Naive thymus-derived CD4-positive, alpha-beta T cell (primary cell): ENCODE measurements at regions of chr2 and their contacts with region 1.

Region 1: GRCh38 chr2:42568401-42569115 is at the start of gene MTA3:
- DNase-seq: peak; percentile 51 to 76 (median 67)
- ATAC-seq: peak; percentile 85
- H3K4me3 ChIP-seq: peak within 1 kb of the TSS; percentile 52
- H3K4me3 Mint-ChIP-seq: peak within 1 kb of the TSS; percentile 89 to 99 (median 94)
- H3K27ac ChIP-seq: peak within 1 kb of the TSS; percentile 74
- H3K27ac Mint-ChIP-seq: peak within 1 kb of the TSS; percentile 88 to 97 (median 94)
- H3K4me1 ChIP-seq: peaks cover 8 to 19% of the 10 kb centered on the region in 2 donors
- H3K4me1 Mint-ChIP-seq: peaks cover 11 to 50% (median 41%) of the 10 kb centered on the region in 7 donors
- H3K27me3 ChIP-seq: no peaks in the 10 kb centered on the region
- H3K27me3 Mint-ChIP-seq: no peaks in the 10 kb centered on the region
- total RNA-seq, gene MTA3: 23.9 to 49.1 (median 34.3) TPM

Region 2: DNA sequence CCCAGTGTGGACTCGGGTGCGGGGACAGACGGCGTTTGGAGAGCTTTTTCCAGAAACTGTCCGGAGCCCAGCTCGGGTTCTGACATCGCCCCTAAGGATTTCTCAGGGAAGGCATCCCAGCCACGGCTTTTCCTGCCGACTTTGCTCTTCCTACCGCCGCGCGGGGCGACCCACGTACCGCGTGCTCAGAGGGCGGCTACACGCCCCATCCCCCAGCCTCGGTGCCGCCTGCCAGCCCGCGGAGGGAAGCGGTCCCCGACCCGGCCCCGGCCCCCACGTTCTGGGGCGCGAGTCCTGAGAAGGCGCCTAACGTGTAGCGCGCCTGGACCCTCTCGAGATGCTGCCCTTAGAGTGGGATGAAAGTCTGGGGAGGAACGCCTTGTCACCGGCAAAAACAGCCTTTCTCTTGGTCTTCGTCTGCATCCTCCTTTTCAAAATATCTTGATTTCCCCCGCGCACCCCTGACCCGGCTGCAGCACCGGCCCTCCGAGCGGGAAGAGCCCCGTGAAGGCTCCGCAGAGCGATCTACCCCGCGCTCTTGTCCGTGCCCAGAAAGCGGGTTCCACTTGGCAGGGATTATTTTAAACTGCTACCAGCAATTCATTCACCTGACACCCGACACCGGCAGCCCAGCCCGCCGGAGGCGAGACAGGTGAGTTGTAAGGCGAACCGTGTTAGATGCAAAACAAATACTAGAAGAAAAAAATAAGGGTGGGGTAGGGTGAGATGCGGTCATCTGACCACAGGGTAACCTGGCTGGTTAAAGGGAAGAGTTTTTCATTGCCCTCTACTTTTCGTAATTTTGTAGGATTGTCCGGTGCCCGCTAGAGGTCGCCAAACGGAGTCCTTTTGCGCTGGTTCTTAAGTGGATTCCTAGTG is 74.0 kb before region 1 on chr2:
- CTCF ChIA-PET with region 1: interaction called, 3 read pairs
- POLR2A ChIA-PET with region 1: interaction called, 5 read pairs
- intact Hi-C with region 1: loop called (anchors 1 to 2 kb)
- DNase-seq: peak; percentile 60 to 83 (median 77)
- ATAC-seq: peak; percentile 74
- H3K4me3 ChIP-seq: peak overlapping the region; percentile 60
- H3K4me3 Mint-ChIP-seq: peak overlapping the region; percentile 82 to 99 (median 96)
- H3K27ac ChIP-seq: peak overlapping the region; percentile 51
- H3K27ac Mint-ChIP-seq: peak overlapping the region; percentile 37 to 93 (median 83)
- H3K4me1 ChIP-seq: peaks cover 0 to 10% of the 10 kb centered on the region in 2 donors
- H3K4me1 Mint-ChIP-seq: peaks cover 0 to 18% (median 10%) of the 10 kb centered on the region in 7 donors
- H3K27me3 ChIP-seq: no peaks in the 10 kb centered on the region
- H3K27me3 Mint-ChIP-seq: peaks cover 0 to 49% (median 5%) of the 10 kb centered on the region in 5 donors

Region 3: DNA sequence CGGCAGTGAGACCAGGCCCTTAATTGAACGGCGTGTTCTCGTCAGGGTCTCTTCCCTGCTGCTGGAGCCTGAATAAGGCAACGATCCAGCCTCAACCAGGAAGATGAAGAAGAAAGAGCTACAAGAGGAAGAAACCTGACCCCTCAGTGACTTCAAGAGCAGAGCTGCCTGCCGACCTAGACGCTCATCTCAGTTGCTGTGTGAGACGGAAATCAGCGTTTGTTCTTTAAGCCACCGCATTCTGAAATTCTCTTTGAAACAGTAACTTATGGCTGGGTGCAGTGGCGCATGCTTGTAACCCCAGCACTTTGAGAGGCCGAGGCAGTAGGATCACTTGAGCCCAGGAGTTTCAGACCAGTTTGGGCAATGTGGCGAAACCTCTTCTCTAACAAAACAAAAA is 45.2 kb before region 1 on chr2:
- CTCF ChIA-PET with region 1: no interaction called
- POLR2A ChIA-PET with region 1: no interaction called
- intact Hi-C with region 1: loop called in 1 of 2 experiments (anchors 1 kb)
- DNase-seq: peak in 7 of 9 donors; percentile 9 to 53 (median 46)
- ATAC-seq: peak; percentile 70
- H3K4me3 ChIP-seq: no peak overlapping the region
- H3K4me3 Mint-ChIP-seq: peak overlapping the region in 9 of 10 donors; percentile 6 to 78 (median 59)
- H3K27ac ChIP-seq: peak overlapping the region; percentile 27
- H3K27ac Mint-ChIP-seq: peak overlapping the region in 8 of 9 donors; percentile 71 to 92 (median 85)
- H3K4me1 ChIP-seq: no peaks in the 10 kb centered on the region
- H3K4me1 Mint-ChIP-seq: peaks cover 0 to 26% (median 11%) of the 10 kb centered on the region in 7 donors
- H3K27me3 ChIP-seq: no peaks in the 10 kb centered on the region
- H3K27me3 Mint-ChIP-seq: no peaks in the 10 kb centered on the region